Caco-2 (cell line): ENCODE measurements at regions of chr11 and their contacts with region 1.

Region 1: GRCh38 chr11:57712256-57713150 is at the start of gene TMX2:
- DNase-seq: peak; percentile 95 to 98
- H3K4me3 ChIP-seq: peak within 1 kb of the TSS; percentile 91
- H3K4me3 Mint-ChIP-seq: peak within 1 kb of the TSS; percentile 97
- H3K27ac Mint-ChIP-seq: peak within 1 kb of the TSS; percentile 99
- H3K4me1 ChIP-seq: peaks cover 6% of the 10 kb centered on the region; the same call in 1 of the 2 replicates
- H3K4me1 Mint-ChIP-seq: peaks cover 18% of the 10 kb centered on the region
- H3K27me3 ChIP-seq: no peaks in the 10 kb centered on the region
- H3K27me3 Mint-ChIP-seq: no peaks in the 10 kb centered on the region
- CTCF ChIP-seq: no peak
- total RNA-seq, gene TMX2: 150 and 152 TPM in 2 replicates

Region 2: DNA sequence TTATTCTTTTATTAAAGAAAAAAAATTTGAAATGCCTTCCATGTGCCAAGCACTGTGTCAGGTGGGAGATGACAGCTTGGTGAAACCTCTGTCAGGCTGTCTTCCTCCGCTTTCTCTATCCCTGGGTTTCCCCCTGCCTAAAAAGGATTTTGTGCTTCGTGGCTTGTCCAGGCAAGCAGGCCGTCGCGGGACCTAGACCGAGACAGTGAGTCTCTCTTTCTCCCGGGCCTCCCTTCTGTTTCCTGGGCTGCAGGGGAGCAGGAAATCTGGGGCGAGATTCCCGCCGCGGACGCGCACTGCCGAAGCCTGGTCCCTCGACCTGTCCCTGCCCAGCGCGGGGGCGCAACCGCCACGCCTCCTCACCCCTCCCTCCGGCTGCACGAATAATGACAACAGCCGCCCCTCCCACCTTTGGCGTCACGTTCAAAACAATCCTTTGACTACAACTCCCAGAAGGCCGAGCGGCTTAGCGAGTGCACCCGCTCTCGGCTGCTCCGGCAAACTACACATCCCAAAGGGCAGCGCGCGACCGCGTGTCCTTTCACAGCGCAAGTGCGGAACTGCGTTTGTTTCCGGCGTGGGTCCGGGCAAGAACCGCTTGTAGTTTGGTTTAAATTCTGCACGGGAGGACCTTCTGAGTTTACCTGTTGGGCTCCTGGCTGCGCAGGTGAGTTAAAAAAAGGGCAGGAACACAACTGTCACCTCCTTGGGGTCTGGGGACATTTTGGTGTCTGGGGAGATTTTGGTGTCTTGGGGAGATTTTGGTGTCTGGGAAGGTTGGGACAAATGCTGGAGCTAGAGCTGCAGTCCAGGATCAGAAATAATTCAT is 55.1 kb before region 1 on chr11 and contains the start of gene CLP1:
- CTCF ChIA-PET with region 1: no interaction called
- POLR2A ChIA-PET with region 1: no interaction called
- intact Hi-C with region 1: loop called (anchors 1 kb)
- DNase-seq: peak; percentile 99
- H3K4me3 ChIP-seq: peak within 1 kb of the TSS; percentile 61
- H3K4me3 Mint-ChIP-seq: peak within 1 kb of the TSS; percentile 88
- H3K27ac Mint-ChIP-seq: peak within 1 kb of the TSS; percentile 76
- H3K4me1 ChIP-seq: no peaks in the 10 kb centered on the region
- H3K4me1 Mint-ChIP-seq: peaks cover 8% of the 10 kb centered on the region
- H3K27me3 ChIP-seq: no peaks in the 10 kb centered on the region
- H3K27me3 Mint-ChIP-seq: no peaks in the 10 kb centered on the region
- CTCF ChIP-seq: no peak
- total RNA-seq, gene CLP1: 21.0 and 22.1 TPM in 2 replicates

Region 3: DNA sequence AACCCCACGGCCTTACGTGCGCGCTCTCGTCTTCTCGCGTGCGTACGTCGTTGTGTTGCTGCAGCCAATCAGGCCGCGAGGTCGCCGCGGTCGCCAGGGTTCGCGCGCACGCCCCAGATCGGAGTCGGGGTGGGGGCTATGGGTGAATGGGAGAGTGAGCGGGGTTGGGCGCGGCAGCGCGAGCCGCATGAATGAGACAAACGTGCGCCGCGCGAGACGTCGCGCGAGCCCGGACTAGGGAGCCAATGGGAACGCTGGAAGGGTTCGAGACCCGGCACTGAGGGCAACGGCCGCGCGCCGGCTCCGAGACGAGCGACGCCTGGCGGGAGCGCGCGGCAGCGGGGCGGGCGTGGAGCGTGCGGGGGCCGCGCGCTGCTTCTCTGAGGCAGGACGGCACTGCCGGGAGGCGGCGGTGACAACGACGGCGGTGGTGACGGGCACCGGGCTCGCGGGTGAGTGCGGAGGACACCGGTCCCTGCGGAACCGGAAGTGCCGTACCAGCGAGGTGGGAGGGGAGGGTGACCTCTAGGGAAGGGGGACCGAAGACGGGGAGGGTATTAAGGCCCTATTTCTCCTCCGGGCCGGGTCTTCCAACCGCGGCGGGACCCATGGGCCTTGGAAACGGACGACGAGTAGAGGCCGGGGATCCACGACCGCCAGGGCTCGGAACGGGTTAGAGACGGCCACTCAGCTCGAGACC is 44.6 kb before region 1 on chr11 and contains the start of gene ZDHHC5:
- CTCF ChIA-PET with region 1: no interaction called
- POLR2A ChIA-PET with region 1: no interaction called
- intact Hi-C with region 1: loop called (anchors 1 kb)
- DNase-seq: peak; percentile 100
- H3K4me3 ChIP-seq: peak within 1 kb of the TSS; percentile 74
- H3K4me3 Mint-ChIP-seq: peak within 1 kb of the TSS; percentile 99
- H3K27ac Mint-ChIP-seq: peak within 1 kb of the TSS; percentile 100
- H3K4me1 ChIP-seq: peaks cover 14% of the 10 kb centered on the region; the same call in 1 of the 2 replicates
- H3K4me1 Mint-ChIP-seq: peaks cover 12% of the 10 kb centered on the region
- H3K27me3 ChIP-seq: no peaks in the 10 kb centered on the region
- H3K27me3 Mint-ChIP-seq: no peaks in the 10 kb centered on the region
- CTCF ChIP-seq: peak; percentile 4 to 46
- total RNA-seq, gene ZDHHC5: 66.0 and 72.2 TPM in 2 replicates

Region 4: GRCh38 chr11:57741132-57742086 is 28.9 kb after region 1 on chr11 and contains the start of gene SELENOH:
- CTCF ChIA-PET with region 1: no interaction called
- POLR2A ChIA-PET with region 1: interaction called, 15 read pairs
- intact Hi-C with region 1: loop called (anchors 1 kb)
- DNase-seq: peak; percentile 98 to 99
- H3K4me3 ChIP-seq: peak within 1 kb of the TSS; percentile 83
- H3K4me3 Mint-ChIP-seq: peak within 1 kb of the TSS; percentile 94
- H3K27ac Mint-ChIP-seq: peak within 1 kb of the TSS; percentile 98
- H3K4me1 ChIP-seq: peaks cover 5% of the 10 kb centered on the region
- H3K4me1 Mint-ChIP-seq: peaks cover 1% of the 10 kb centered on the region
- H3K27me3 ChIP-seq: no peaks in the 10 kb centered on the region
- H3K27me3 Mint-ChIP-seq: no peaks in the 10 kb centered on the region
- CTCF ChIP-seq: no peak
- total RNA-seq, gene SELENOH: 174 and 175 TPM in 2 replicates

Region 5: DNA sequence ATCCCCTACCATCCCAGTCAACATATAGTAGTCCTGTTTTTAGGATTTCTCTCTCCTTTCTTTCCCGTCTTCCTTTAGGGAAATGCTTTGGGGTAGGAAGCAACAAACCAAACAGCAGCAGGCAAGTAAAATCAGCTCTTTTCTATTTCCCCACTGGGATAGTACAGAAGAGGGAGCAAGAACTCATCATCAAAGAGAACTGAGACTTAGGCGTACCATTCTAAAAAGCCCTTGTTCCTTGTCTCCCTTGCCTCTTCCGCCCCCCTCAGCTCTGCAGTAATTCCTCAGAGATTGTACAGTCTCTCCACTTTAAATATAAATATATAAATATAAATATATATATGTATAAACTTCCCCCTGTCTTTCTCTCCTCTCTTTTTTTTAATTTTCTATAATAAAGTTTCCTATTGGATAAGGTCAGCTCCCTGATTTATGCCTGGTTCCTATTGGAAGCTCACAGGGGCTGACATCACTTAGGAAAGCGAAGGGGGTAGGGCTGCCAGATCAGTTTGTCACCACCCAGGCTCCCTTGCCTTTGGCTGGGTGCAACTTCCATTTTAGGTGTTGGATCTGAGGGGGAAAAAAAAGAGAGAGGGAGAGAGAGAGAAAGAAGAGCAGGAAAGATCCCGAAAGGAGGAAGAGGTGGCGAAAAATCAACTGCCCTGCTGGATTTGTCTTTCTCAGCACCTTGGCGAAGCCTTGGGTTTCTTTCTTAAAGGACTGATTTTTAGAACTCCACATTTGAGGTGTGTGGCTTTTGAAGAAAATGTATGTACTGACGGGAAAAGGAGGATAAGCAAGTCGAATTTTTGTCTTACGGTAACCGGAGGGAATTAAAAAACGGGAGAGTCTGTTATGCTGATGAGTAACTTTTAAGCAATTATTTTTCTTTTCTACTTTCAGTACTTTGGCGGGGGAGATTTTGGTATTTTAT is 49.1 kb after region 1 on chr11 and contains the start of gene CTNND1:
- CTCF ChIA-PET with region 1: no interaction called
- POLR2A ChIA-PET with region 1: interaction called, 9 read pairs
- intact Hi-C with region 1: loop called (anchors 1 kb)
- DNase-seq: peak; percentile 94 to 96
- H3K4me3 ChIP-seq: peak within 1 kb of the TSS; percentile 84
- H3K4me3 Mint-ChIP-seq: peak within 1 kb of the TSS; percentile 96
- H3K27ac Mint-ChIP-seq: peak within 1 kb of the TSS; percentile 98
- H3K4me1 ChIP-seq: peaks cover 27% of the 10 kb centered on the region
- H3K4me1 Mint-ChIP-seq: peaks cover 27% of the 10 kb centered on the region
- H3K27me3 ChIP-seq: no peaks in the 10 kb centered on the region
- H3K27me3 Mint-ChIP-seq: no peaks in the 10 kb centered on the region
- CTCF ChIP-seq: peak in 1 of 2 experiments; percentile 23
- total RNA-seq, gene CTNND1: 223 and 225 TPM in 2 replicates

Region 6: DNA sequence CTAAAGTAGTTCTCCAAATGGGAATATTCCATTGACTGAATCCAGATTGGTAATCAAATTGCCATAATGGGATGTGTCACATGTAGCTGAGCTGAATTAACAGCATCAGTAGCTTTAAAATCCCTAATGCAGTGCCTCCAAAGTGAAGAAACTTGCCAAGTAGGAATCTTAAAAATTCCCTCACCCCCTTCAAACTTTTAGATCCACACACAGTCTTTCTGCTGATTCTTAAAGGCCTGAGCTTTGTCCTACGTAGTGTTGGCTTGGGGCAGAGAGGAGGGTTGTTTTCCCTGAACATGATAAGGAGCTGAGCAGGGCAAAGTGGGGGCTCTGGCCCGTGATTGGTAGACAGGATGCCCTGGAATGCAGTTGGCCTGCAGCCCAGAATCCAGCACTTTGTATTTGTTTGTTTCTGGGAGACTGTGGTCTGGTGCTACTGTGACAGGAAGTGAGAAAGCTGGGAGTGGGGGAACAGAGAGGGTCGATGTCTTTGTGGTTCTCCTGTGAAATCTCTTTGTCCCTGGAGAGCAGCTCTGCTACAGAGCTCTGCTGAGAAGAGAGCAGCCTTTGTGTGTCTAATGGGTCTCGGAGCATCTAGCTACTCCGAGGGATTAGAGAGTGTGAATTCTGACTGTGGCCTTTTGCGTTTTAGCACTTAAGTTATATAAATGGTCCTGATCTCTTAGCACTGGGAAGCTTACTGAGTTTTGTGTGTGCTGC is 66.0 kb after region 1 on chr11:
- CTCF ChIA-PET with region 1: no interaction called
- POLR2A ChIA-PET with region 1: interaction called, 7 read pairs
- intact Hi-C with region 1: loop called (anchors 1 kb)
- DNase-seq: peak; percentile 90 to 94
- H3K4me3 ChIP-seq: peak overlapping the region; percentile 23
- H3K4me3 Mint-ChIP-seq: peak overlapping the region; percentile 65
- H3K27ac Mint-ChIP-seq: peak overlapping the region; percentile 94
- H3K4me1 ChIP-seq: peaks cover 87% of the 10 kb centered on the region
- H3K4me1 Mint-ChIP-seq: peaks cover 80% of the 10 kb centered on the region
- H3K27me3 ChIP-seq: no peaks in the 10 kb centered on the region
- H3K27me3 Mint-ChIP-seq: no peaks in the 10 kb centered on the region
- CTCF ChIP-seq: no peak